Transverse colon (tissue), 4 donors: ENCODE measurements at regions of chr16 and their contacts with region 1.

Region 1: DNA sequence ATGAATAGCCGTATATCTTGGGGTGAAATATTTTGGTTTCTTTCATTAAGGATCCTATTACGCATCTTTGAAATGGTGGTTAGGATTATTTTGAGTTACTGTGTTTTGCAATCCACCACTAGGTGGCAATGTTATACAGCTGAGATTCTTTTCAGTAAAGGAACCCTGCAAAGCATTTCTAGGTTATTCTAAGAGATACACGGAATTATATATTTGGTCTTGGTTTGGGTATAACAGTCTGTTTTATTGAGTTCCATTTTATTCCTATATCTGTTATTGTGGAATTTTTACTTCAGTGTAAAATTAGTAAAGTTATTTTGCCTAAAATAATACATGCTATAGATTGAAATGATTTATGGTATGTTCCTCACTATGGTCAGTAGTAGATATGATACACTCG is 62.9 kb upstream of the CPHXL start:
- DNase-seq: no peak
- H3K4me3 ChIP-seq: no peak overlapping the region
- H3K27ac ChIP-seq: no peak overlapping the region
- H3K4me1 ChIP-seq: no peaks in the 10 kb centered on the region
- H3K27me3 ChIP-seq: peaks cover 16% of the 10 kb centered on the region
- CTCF ChIP-seq: peak; percentile 72 to 87 (median 84)
- EP300 ChIP-seq: no peak
- POLR2A ChIP-seq: no peak

Region 2: GRCh38 chr16:74291577-74292208 is 1497.5 kb before region 1 on chr16:
- in situ Hi-C with region 1: no loop called
- intact Hi-C with region 1: no loop called
- DNase-seq: no peak
- H3K4me3 ChIP-seq: no peak overlapping the region
- H3K27ac ChIP-seq: no peak overlapping the region
- H3K4me1 ChIP-seq: peaks cover 6 to 10% (median 9%) of the 10 kb centered on the region in 4 donors
- H3K27me3 ChIP-seq: no peaks in the 10 kb centered on the region
- CTCF ChIP-seq: no peak
- EP300 ChIP-seq: no peak
- POLR2A ChIP-seq: no peak

Region 3: GRCh38 chr16:74682527-74682926 is 1106.7 kb before region 1 on chr16:
- in situ Hi-C with region 1: no loop called
- intact Hi-C with region 1: no loop called
- DNase-seq: no peak
- H3K4me3 ChIP-seq: no peak overlapping the region
- H3K27ac ChIP-seq: no peak overlapping the region
- H3K4me1 ChIP-seq: no peaks in the 10 kb centered on the region
- H3K27me3 ChIP-seq: no peaks in the 10 kb centered on the region
- CTCF ChIP-seq: no peak
- EP300 ChIP-seq: no peak
- POLR2A ChIP-seq: no peak

Region 4: DNA sequence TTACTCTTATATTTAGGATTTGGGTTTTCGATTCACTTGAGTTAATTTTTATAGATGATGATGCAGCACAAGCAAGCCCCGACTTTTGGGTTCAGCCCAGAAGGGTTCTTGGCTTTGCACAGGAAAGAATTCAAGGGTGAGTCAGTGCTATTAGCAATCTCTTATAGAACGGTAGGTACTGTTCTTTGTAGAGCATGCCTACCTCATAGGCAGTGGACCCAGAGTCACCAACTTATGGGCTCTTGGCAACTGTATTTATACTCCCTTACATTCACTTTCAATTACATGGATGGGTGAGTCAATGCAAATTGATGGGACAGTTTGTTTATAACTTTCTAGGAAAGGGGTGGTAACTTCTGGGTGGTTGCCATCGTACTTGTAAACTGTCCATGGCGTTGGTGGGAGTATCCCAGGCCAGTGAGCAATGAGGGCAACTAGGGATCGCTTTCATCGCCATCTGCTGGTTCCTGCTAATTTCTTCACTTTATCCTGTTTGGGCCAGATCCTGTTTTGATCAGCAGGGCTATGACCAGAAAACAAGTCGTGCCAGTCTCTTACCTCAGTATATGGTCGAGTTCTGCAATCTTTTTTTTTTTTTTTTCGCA is 850.5 kb after region 1 on chr16:
- in situ Hi-C with region 1: loop called in 1 of 4 experiments (anchors 25 kb)
- intact Hi-C with region 1: no loop called
- DNase-seq: no peak
- H3K4me3 ChIP-seq: no peak overlapping the region
- H3K27ac ChIP-seq: no peak overlapping the region
- H3K4me1 ChIP-seq: no peaks in the 10 kb centered on the region
- H3K27me3 ChIP-seq: no peaks in the 10 kb centered on the region
- CTCF ChIP-seq: peak in 1 of 5 experiments; percentile 13
- EP300 ChIP-seq: no peak
- POLR2A ChIP-seq: no peak

Region 5: GRCh38 chr16:76653390-76654026 is 864.3 kb after region 1 on chr16:
- in situ Hi-C with region 1: loop called in 3 of 4 experiments (anchors 25 kb)
- intact Hi-C with region 1: no loop called
- DNase-seq: no peak
- H3K4me3 ChIP-seq: no peak overlapping the region
- H3K27ac ChIP-seq: no peak overlapping the region
- H3K4me1 ChIP-seq: no peaks in the 10 kb centered on the region
- H3K27me3 ChIP-seq: no peaks in the 10 kb centered on the region
- CTCF ChIP-seq: peak in 4 of 5 experiments; percentile 31 to 47 (median 38)
- EP300 ChIP-seq: no peak
- POLR2A ChIP-seq: no peak

Region 6: GRCh38 chr16:77171745-77172635 is 1382.8 kb after region 1 on chr16:
- in situ Hi-C with region 1: loop called (anchors 10 kb)
- intact Hi-C with region 1: loop called (anchors 5 kb)
- DNase-seq: no peak
- H3K4me3 ChIP-seq: no peak overlapping the region
- H3K27ac ChIP-seq: no peak overlapping the region
- H3K4me1 ChIP-seq: no peaks in the 10 kb centered on the region
- H3K27me3 ChIP-seq: peaks cover 10% of the 10 kb centered on the region
- CTCF ChIP-seq: peak; percentile 63 to 72 (median 72)
- EP300 ChIP-seq: no peak
- POLR2A ChIP-seq: no peak